ENCODE measurements at regions of chr1 and their contacts with region 1.

Region 1: GRCh38 chr1:153568367-153569099 is 2.9 kb upstream of the S100A2 start:
- DNase-seq: peak; percentile 37
- H3K4me3 ChIP-seq: peak overlapping the region; percentile 20 to 55 (median 28)
- H3K27ac ChIP-seq: peak overlapping the region; percentile 95 to 100 (median 99)
- H3K4me1 ChIP-seq: peaks cover 49 to 75% (median 56%) of the 10 kb centered on the region in 3 donors
- H3K27me3 ChIP-seq: no peaks in the 10 kb centered on the region
- CTCF ChIP-seq: peak; percentile 97 to 100 (median 99)
- POLR2A ChIP-seq: no peak

Region 2: GRCh38 chr1:153375511-153375910 is 193.0 kb before region 1 on chr1 and contains the start of gene S100A12:
- intact Hi-C with region 1: no loop called
- DNase-seq: no peak
- H3K4me3 ChIP-seq: no peak within 1 kb of the TSS
- H3K27ac ChIP-seq: peak within 1 kb of the TSS; percentile 62 to 85 (median 78)
- H3K4me1 ChIP-seq: peaks cover 18 to 84% (median 24%) of the 10 kb centered on the region in 3 donors
- H3K27me3 ChIP-seq: peaks cover 0 to 3% (median 0%) of the 10 kb centered on the region in 4 donors
- CTCF ChIP-seq: no peak
- POLR2A ChIP-seq: peak in 1 of 4 donors; percentile 13
- total RNA-seq, gene S100A12: 16.2 to 154 (median 49.0) TPM

Region 3: DNA sequence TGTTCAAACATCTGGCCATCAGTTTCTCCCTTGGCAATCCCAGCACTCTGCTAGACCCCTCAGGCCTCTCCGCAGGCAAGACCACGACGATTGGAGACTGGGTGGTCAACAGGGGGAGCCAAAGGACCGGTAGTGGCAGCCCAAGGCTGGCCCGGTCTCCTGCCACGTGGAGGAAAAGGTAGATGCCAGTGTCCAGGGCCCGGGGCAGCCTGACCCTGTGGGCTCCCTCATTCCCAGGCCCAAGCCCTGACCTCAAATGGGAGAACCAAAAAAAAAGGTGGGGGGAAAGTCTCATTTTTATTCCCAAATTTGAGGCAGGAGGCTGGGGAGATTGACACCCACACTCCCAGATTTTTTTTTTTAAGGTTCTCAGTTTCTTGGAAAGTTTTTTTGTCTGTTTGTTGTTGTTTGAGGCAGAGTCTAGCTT is 57.5 kb before region 1 on chr1:
- intact Hi-C with region 1: loop called (anchors 10 kb)
- DNase-seq: no peak
- H3K4me3 ChIP-seq: no peak overlapping the region
- H3K27ac ChIP-seq: peak overlapping the region in 1 of 4 donors; percentile 0
- H3K4me1 ChIP-seq: peaks cover 31 to 60% (median 31%) of the 10 kb centered on the region in 3 donors
- H3K27me3 ChIP-seq: no peaks in the 10 kb centered on the region
- CTCF ChIP-seq: peak; percentile 74 to 94 (median 88)
- POLR2A ChIP-seq: no peak

Region 4: DNA sequence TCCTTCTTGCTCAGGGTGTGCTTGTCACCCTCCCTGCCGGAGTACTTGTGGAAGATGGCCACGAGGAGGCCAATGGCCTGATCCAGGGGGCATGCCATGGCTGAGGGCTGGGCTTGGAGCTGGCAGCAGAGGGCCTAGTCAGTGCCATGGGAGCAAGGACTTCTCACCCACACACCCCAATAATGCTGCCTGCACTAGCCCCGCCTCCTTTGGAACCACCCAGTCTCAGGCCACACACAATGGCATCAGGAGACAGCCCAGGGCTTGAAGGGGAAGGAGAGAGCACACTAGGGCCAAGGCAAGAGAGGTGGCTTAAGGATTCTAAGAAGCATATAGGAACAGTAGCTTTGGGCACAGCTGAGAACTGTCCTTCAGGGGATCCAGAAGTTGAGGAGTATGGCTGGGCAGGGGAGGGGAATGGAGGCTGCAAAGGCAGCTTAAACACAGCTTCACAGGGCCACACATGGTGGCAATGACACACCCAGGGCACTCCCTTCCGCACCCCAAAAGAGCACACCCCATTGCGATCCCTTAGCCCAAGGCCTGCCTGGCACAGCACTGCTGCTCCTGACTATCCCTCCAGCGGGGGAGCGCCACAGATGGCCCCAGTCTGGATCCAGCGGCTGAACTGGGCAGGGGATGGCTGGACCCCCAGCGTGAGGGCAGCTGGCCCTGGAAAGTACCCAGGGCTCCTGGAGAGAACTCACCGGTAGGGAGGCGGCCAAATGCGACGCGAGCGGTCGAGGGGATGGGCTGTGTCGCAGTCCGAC is 33.1 kb before region 1 on chr1 and contains the start of gene S100A6:
- intact Hi-C with region 1: loop called (anchors 2 kb)
- DNase-seq: no peak
- H3K4me3 ChIP-seq: peak within 1 kb of the TSS; percentile 55 to 91 (median 76)
- H3K27ac ChIP-seq: peak within 1 kb of the TSS; percentile 99 to 100 (median 100)
- H3K4me1 ChIP-seq: peaks cover 46 to 89% (median 69%) of the 10 kb centered on the region in 3 donors
- H3K27me3 ChIP-seq: no peaks in the 10 kb centered on the region
- CTCF ChIP-seq: peak in 1 of 6 experiments; percentile 11
- POLR2A ChIP-seq: peak in 1 of 4 donors; percentile 66
- total RNA-seq, gene S100A6: 270 to 943 (median 394) TPM